Activated CD8-positive, alpha-beta T cell treated with anti-CD3 and anti-CD28 coated beads for 36 hours (primary cell): ENCODE measurements at regions of chr17 and their contacts with region 1.

Region 1: GRCh38 chr17:56319517-56319916 is 166.2 kb downstream of the ANKFN1 start:
- DNase-seq: no peak
- ATAC-seq: peak; percentile 56
- H3K4me3 Mint-ChIP-seq: no peak overlapping the region
- H3K27ac Mint-ChIP-seq: no peak overlapping the region
- H3K4me1 Mint-ChIP-seq: no peaks in the 10 kb centered on the region
- H3K27me3 Mint-ChIP-seq: peaks cover 3% of the 10 kb centered on the region
- CTCF ChIP-seq: peak; percentile 69

Region 2: DNA sequence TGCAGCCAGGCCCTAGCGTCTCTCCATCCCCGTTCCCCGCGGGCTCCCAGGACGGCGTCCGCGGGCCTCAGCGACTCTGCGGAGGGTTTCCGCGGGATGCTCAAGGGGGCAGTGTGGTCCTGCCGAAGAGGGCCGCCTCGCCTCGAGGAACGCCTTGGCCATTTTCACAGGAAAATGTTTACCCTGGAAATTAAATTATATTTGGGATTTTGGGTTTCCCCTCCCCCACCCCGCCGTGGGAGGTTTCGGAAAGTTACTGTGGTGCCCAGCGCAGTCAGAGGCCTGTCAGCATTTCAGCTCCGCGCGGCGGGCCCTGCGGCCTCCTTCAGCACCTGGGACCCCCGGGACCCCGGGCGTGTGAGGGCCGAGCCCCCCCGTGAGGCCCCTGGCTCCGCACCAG is 474.1 kb before region 1 on chr17:
- CTCF ChIA-PET with region 1: interaction called, 3 read pairs
- POLR2A ChIA-PET with region 1: no interaction called
- intact Hi-C with region 1: loop called (anchors 10 kb)
- DNase-seq: peak; percentile 26
- ATAC-seq: no peak
- H3K4me3 Mint-ChIP-seq: no peak overlapping the region
- H3K27ac Mint-ChIP-seq: no peak overlapping the region
- H3K4me1 Mint-ChIP-seq: no peaks in the 10 kb centered on the region
- H3K27me3 Mint-ChIP-seq: peaks cover 10% of the 10 kb centered on the region
- CTCF ChIP-seq: peak; percentile 46

Region 3: DNA sequence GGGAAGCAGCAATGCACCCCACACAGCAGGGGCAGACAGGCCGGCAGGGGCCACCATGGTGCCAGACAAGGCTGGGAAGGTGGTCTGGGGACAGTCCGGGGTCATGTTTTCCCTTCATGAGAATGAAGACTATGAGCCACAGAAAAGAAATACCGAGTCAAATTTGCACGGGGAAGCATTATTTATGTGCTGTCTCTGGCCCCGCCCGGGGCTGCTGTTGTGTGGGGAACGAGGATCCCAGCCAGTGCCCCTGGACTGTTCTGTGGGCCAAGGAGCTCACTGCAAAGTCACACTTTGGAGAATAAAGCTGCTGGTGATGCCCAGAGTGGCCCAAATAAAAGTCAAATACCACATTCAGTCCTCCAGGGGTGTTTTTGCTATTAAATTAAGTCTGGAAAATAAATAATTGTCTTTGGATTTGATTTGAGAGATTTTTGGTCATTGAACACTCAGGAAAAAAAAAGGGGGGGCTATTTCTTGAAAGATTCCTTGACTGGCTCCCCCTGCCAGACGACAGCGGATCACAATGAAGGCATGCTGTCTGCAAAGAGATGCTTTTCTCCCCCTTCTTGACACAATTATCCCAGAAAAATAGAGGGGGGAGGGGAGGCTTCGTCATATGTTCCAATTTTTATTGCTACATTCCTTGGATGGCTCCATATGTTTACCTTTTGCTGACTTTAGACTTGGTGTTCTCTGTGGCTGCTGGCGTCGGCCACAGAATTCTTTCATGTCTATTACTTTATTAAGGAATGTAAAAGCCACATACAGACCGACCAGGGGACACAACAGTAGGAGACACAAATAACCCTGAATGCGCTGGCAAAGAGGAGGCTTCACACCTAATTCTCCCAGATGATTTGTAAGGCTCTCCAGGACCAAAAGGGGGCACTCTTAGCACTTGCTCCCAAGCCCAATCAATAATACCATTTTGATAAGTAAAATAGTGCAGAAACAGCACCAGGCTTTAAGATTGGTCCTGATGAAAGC is 193.4 kb before region 1 on chr17:
- CTCF ChIA-PET with region 1: interaction called, 9 read pairs
- POLR2A ChIA-PET with region 1: no interaction called
- intact Hi-C with region 1: loop called (anchors 10 kb)
- DNase-seq: peak; percentile 28
- ATAC-seq: no peak
- H3K4me3 Mint-ChIP-seq: no peak overlapping the region
- H3K27ac Mint-ChIP-seq: no peak overlapping the region
- H3K4me1 Mint-ChIP-seq: no peaks in the 10 kb centered on the region
- H3K27me3 Mint-ChIP-seq: no peaks in the 10 kb centered on the region
- CTCF ChIP-seq: peak; percentile 62